ENCODE measurements at regions of chrX and their contacts with region 1.

Region 1: GRCh38 chrX:63754860-63755582 is 30.0 kb downstream of the ARHGEF9 start:
- DNase-seq: peak; percentile 89
- H3K4me3 ChIP-seq: peak overlapping the region; percentile 66 to 81 (median 78)
- H3K27ac ChIP-seq: peak overlapping the region; percentile 90
- H3K4me1 ChIP-seq: peaks cover 16% of the 10 kb centered on the region
- H3K27me3 ChIP-seq: no peaks in the 10 kb centered on the region
- CTCF ChIP-seq: no peak

Region 2: DNA sequence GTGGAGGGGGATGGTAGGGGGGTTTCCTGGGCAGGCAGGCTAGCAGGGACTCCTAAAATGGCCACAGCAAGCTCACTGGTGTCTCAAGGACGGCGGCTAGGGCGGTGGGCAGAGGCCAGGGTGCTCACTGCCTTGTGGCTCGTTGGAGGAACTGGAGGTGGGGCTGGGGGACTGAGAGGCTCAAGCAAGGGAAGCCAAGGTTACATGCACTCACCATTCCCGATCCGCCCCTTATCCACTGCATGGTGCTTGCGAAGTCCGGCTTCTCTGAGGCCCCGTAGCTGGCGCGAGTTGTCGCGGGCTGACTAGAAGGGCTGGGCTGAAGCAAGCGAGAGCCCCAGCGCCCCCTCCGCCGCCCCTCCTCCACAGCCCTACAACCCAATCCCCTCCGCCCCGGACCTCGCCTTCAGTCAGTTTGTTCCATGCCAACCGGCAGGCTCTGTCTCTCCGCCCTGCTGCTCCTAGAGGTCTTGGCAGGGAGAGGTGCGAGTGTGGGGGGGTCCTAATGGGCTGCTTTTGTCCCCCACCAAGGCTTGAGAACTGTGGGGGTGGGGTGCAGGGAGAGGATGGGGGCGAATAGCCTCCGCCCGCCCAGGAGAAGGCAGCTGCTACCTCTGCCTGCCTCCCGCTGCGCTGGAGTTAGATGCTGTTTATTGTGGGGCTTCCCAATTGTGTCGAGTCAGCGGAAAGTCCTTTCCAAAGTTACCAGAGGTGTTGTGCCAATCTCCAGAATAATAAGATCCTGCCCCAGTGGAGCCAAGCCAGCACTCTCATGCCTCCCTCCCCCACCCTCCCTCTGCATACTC is 30.1 kb after region 1 on chrX and contains the start of gene ARHGEF9:
- CTCF ChIA-PET with region 1: no interaction called
- dilution Hi-C with region 1: no loop called
- in situ Hi-C with region 1: no loop called
- intact Hi-C with region 1: loop called (anchors 1 kb)
- DNase-seq: no peak
- H3K4me3 ChIP-seq: peak within 1 kb of the TSS in 1 of 3 experiments; percentile 9
- H3K27ac ChIP-seq: no peak within 1 kb of the TSS
- H3K4me1 ChIP-seq: no peaks in the 10 kb centered on the region
- H3K27me3 ChIP-seq: no peaks in the 10 kb centered on the region
- CTCF ChIP-seq: no peak
- total RNA-seq, gene ARHGEF9: 25.7 to 34.0 TPM

Region 3: GRCh38 chrX:63809173-63809572 is 54.2 kb after region 1 on chrX:
- CTCF ChIA-PET with region 1: no interaction called
- dilution Hi-C with region 1: no loop called
- in situ Hi-C with region 1: no loop called
- intact Hi-C with region 1: no loop called
- DNase-seq: no peak
- H3K4me3 ChIP-seq: no peak overlapping the region
- H3K27ac ChIP-seq: no peak overlapping the region
- H3K4me1 ChIP-seq: no peaks in the 10 kb centered on the region
- H3K27me3 ChIP-seq: no peaks in the 10 kb centered on the region
- CTCF ChIP-seq: no peak

Region 4: GRCh38 chrX:63918611-63919010 is 163.6 kb after region 1 on chrX:
- CTCF ChIA-PET with region 1: no interaction called
- dilution Hi-C with region 1: no loop called
- in situ Hi-C with region 1: no loop called
- intact Hi-C with region 1: loop called (anchors 5 kb)
- DNase-seq: peak; percentile 28
- H3K4me3 ChIP-seq: no peak overlapping the region
- H3K27ac ChIP-seq: no peak overlapping the region
- H3K4me1 ChIP-seq: peaks cover 7% of the 10 kb centered on the region
- H3K27me3 ChIP-seq: no peaks in the 10 kb centered on the region
- CTCF ChIP-seq: peak; percentile 24 to 50